ENCODE measurements at regions of chr19 and their contacts with region 1.

Region 1: GRCh38 chr19:46766569-46767317 is 20.5 kb upstream of the STRN4 start:
- DNase-seq: no peak
- H3K4me3 ChIP-seq: no peak overlapping the region
- CTCF ChIP-seq: peak; percentile 75

Region 2: GRCh38 chr19:46776927-46777911 is 10.5 kb after region 1 on chr19:
- CTCF ChIA-PET with region 1: interaction called, 17 read pairs
- POLR2A ChIA-PET with region 1: interaction called, 8 read pairs
- DNase-seq: no peak
- H3K4me3 ChIP-seq: no peak overlapping the region
- CTCF ChIP-seq: no peak

Region 3: DNA sequence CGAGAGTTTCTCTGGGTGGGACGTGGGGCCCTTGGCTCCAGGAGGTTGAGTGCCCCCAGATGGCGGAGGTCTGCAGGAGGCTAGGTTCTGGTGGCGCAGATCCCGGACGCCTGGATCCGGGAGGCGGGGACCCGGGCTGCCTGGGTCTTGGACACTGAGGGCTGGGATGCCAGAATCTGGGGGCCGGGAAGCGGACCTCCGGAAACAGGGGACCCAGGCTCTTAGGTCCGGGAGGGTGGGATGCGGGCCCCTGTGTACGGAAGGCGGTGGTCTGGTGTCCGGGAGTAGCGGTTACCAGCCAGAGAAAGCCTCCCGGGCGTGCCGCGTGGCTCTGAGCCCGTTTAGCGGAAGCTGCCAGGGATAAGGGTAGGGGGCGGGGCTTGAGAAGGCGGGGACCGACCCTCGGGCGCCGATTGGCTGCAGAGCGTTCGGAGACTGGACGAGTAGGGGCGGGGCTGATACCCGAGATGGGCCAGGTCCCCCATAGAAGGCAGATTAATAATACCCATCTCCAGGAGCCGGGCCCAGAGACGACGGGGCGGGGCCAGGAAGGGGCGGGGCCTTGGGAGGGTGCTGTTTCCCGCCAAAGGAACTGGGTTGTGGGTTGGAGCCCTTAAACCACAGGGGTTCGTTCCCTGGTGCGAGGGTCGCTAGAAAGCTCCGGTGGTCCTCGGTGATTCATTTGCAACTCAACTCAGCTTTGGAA is 21.7 kb after region 1 on chr19 and contains the start of gene SLC1A5:
- CTCF ChIA-PET with region 1: interaction called, 15 read pairs
- POLR2A ChIA-PET with region 1: interaction called, 3 read pairs
- DNase-seq: peak; percentile 79
- H3K4me3 ChIP-seq: peak within 1 kb of the TSS; percentile 95
- CTCF ChIP-seq: no peak

Region 4: DNA sequence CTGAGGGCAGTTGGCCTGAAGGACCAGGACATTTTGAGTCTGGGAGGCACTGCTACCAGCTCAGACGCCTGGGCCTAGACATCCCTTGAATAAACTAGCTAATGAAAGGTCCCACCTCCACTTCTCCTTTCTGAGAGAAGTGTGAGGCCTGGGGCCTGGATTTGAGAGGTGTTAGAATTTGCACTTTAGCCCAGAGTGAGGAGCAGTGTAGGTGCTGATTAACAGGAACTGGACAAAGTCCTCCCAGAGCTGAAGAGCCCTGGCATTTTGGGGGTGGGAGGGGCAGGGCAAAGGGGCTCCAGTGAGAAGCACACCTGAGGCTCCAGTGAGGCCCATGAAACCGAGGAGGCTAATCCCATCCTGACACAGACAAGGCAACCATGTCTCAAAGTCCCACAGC is 36.8 kb after region 1 on chr19:
- CTCF ChIA-PET with region 1: no interaction called
- POLR2A ChIA-PET with region 1: no interaction called
- DNase-seq: no peak
- H3K4me3 ChIP-seq: no peak overlapping the region
- CTCF ChIP-seq: no peak

Measured in AG04449 (cell line).